Breast epithelium (tissue), 4 donors: ENCODE measurements at regions of chr16 and their contacts with region 1.

Region 1: DNA sequence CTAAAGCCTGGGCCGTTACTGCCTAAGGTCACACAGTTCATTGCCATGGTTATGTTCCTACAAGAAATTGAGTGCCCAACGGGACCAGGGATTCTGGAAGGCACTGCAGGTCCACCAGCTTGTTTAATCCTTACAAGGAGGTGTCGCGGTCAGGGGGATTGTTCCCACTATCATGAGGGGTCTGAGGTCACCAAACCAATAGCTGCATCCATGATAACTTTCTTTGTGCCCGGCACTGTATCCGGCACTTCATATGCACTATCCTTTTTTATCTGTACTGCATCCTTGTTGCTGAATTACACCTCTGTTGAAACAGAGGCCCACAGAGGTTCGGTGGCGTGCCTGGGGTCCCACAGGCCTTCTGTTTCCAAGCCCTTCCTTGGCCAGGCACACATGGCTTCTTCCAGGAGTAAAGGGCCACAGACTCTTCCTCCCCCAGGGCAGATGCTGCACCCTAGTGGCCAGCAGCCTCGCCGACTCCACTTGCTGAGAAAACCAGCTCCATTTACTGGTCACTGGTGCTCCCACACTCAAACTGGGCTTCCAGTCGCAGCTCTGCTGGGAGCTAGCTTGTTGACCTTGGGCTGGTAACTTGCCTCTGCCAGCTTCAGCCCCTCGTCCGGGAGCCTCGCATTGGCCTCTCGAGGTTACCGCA is 82.0 kb upstream of the PLCG2 start:
- DNase-seq: peak; percentile 50 to 79
- H3K4me3 ChIP-seq: no peak overlapping the region
- H3K27ac ChIP-seq: peak overlapping the region; percentile 58 to 72
- H3K4me1 ChIP-seq: no peaks in the 10 kb centered on the region
- H3K27me3 ChIP-seq: no peaks in the 10 kb centered on the region
- CTCF ChIP-seq: peak in 2 of 3 donors; percentile 50 to 69
- POLR2A ChIP-seq: no peak

Region 2: DNA sequence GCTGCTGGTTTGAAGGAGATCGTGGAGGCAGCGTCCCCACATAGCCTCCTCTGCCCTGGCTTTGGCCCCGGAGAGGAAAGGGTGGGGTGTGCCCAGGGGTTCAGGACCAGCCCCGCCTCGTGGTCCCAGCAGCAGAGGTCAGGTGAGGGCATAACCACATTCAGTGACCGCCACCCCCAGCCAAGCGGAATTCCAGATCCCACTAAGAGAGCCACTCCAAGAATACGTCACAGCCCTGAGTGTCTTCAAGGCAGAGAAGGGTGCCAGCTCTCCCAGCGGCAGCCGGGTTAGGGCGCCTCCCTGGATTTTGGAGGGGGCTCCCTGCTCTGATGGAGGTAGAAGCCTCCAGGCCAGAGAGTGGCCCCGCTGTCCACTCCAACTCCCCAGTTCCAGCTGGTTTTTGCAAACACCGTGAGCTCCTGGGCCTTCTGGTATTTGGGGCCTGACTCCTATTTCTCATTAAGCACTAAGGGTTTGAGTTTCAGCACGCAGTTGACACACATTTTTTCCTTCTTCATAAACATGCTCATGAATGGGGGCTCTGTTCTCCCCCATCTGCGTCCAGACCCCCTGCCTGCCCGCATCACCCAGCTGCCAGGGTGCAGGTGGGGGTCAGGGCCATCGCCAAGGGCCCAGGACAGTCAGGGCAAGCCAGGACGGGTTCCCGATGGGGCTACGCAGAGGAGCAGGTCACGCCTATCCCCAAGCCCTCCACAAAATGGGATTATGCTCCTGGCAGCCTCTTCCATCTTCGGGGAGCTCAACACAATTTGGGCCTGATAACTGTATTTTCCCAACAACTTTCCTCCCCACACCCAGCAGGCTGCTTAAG is 16.4 kb before region 1 on chr16:
- intact Hi-C with region 1: loop called (anchors 1 kb)
- DNase-seq: no peak
- H3K4me3 ChIP-seq: no peak overlapping the region
- H3K27ac ChIP-seq: peak overlapping the region; percentile 54 to 61
- H3K4me1 ChIP-seq: no peaks in the 10 kb centered on the region
- H3K27me3 ChIP-seq: no peaks in the 10 kb centered on the region
- CTCF ChIP-seq: no peak
- POLR2A ChIP-seq: no peak

Region 3: DNA sequence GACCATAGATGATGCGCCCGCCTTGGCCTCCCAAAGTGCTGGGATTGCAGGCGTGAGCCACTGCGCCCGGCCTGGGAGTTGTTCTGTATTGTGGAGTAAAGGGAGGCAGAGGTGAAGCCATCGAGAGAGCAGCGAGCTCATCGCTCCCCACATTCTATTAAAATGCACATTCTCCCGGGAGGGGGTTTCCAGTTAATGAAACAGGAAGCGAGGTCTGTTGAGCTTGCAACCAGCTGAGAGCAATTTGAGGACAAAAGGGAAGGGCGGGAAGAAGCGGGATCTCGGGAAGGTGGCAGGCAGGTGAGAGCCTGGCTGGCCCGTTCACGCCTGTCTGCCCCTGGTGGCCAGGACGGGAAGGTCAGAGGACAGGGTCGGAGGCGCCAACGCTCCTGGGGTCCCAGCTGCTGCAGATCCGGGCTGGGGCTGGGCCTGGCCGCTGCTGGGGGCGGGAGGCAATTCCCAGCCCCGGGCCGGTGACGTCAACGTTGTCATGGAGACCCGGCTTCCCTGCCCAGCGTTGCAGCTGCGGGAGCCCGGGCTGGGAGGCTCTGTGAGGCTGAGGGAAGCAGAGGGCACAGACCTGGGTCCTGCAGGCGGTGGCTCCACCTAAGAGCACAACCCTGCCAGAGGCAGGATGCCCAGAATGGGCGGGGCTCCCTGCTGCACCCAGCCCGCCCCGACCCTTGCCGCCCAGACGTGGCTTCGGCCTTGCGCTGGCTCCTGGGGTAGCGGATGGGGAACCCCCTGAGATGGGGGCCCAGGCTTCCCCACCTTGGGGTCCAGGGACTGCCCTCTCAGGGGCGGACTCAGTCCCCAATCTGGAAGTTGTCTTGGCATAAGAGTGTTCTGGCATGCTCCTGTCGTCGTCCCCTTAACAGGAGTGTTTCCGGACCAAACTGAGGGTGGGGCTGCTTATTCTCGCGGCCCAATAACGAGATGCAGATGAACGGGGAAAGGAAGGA is 33.3 kb after region 1 on chr16:
- intact Hi-C with region 1: loop called (anchors 1 kb)
- DNase-seq: peak; percentile 61 to 79
- H3K4me3 ChIP-seq: peak overlapping the region; percentile 27 to 69 (median 49)
- H3K27ac ChIP-seq: peak overlapping the region; percentile 58 to 90
- H3K4me1 ChIP-seq: peaks cover 0 to 7% of the 10 kb centered on the region in 2 donors
- H3K27me3 ChIP-seq: no peaks in the 10 kb centered on the region
- CTCF ChIP-seq: peak; percentile 67 to 74 (median 67)
- POLR2A ChIP-seq: no peak

Region 4: DNA sequence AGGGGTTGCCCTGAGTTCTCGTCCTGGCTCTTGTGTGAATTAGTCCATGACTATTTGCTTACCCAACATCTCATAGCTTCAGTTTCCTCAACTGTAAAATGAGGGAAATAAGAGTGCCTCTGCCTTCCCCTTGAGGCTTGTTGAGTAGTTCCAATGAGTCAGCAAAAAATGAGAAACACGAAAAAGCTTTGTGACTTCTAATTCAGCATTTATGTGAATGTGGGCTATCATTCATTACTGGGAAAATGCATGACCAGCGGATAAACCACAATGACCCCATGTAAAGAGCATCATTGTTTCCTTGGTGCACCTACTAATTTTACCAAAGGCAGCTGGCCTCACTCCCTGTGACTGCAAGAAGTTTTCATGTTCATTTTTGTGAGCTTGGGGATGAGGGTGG is 1736.1 kb after region 1 on chr16:
- intact Hi-C with region 1: no loop called
- DNase-seq: no peak
- H3K4me3 ChIP-seq: no peak overlapping the region
- H3K27ac ChIP-seq: no peak overlapping the region
- H3K4me1 ChIP-seq: no peaks in the 10 kb centered on the region
- H3K27me3 ChIP-seq: no peaks in the 10 kb centered on the region
- CTCF ChIP-seq: no peak
- POLR2A ChIP-seq: no peak